Common myeloid progenitor, CD34-positive (primary cell): ENCODE measurements at regions of chr17 and their contacts with region 1.

Region 1: DNA sequence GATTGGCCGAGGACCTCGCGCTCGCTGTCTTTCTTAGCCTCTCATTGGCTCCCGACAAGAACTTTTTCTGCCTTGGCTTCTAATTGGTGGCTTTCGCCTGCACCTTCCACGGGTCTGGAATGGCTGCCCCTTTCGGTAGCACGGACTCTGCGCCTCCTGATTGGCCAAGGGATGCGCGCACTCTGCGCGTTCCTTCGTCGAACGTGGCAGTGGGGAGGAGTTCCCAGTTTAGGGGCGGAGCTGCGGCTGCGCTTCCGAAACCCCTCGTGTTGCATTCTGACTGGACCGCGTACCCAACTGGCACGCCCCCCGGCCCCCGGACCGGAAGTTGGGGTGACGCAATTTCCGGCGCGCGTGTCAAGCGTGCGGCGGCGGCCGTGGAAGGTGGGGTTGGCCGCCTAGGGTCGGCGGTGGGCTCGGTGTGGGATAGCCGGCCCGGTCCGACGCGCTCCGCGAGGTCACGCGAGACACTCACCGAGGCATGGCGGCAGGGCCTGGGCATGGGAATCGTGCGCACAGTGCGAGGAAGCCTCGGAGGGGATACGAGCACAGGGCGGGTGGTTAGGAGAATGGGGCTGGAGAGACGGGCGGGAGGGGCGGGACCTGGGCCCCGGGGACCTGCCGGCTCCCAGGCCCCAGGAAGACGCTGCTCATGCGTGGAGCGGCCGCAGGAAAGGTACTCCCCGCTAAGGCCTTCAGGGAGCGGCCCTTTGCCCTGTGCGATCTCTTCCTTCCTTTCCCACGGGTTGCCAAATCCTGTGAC is 602 bp upstream of the P4HB start:
- DNase-seq: peak; percentile 100
- H3K4me3 ChIP-seq: peak overlapping the region; percentile 22 to 90 (median 76)
- H3K27ac ChIP-seq: peak overlapping the region; percentile 96 to 99
- H3K4me1 ChIP-seq: peaks cover 5 to 30% (median 28%) of the 10 kb centered on the region in 4 experiments
- H3K27me3 ChIP-seq: no peaks in the 10 kb centered on the region

Region 2: DNA sequence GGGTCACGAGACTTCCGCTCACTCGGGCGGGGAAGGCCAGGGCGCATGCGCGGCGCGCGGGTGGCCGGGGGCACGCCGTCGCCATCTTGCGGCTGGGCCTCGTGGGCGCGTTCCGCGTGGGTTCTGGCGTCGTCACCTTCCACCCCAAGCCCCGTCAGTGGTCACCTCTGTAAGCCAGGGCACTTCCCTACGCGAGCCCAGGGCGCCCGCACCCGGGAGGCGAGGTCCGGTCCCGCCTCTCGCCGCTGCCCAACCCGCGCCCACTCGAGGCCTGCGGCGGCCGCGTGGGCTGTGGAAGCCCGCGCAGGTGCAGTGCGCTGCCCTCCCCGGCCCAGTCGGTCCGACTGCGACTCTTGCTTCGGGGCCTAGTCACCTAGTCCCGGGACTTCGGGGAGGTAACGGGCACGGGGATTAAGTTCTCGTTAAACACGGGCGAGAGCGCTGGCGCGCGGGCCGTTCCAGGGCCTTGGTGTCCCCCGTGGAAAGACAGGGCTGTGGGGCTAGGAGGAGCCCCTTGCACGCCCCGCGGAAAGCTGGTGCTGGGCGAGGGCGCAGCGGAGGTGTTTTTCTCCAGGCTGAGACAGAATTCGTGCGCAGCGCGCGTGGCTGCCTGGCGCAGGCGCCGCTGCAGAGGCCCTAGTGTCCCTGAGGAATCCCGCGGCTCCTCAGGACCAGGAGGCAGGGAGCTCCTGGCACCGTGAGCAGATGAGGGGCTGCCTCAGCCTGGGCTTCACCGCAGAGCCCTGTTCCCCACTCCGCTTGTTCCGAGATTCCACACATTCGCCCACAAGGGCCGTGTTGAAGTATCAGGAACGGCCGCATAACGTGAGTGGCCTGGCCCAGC is 10.7 kb after region 1 on chr17:
- CTCF ChIA-PET with region 1: interaction called, 5 read pairs
- POLR2A ChIA-PET with region 1: interaction called, 21 read pairs
- DNase-seq: peak; percentile 88 to 93 (median 91)
- H3K4me3 ChIP-seq: peak overlapping the region; percentile 46 to 90 (median 81)
- H3K27ac ChIP-seq: peak overlapping the region; percentile 88 to 95
- H3K4me1 ChIP-seq: peaks cover 0 to 56% (median 48%) of the 10 kb centered on the region in 4 experiments
- H3K27me3 ChIP-seq: no peaks in the 10 kb centered on the region